ENCODE measurements at regions of chr11 and their contacts with region 1.

Region 1: GRCh38 chr11:47552566-47553416 is at the start of gene CELF1:
- DNase-seq: peak; percentile 98
- H3K4me3 Mint-ChIP-seq: peak within 1 kb of the TSS; percentile 93
- H3K27ac Mint-ChIP-seq: peak within 1 kb of the TSS; percentile 95
- H3K4me1 Mint-ChIP-seq: peaks cover 32% of the 10 kb centered on the region
- H3K27me3 Mint-ChIP-seq: no peaks in the 10 kb centered on the region
- total RNA-seq, gene CELF1: 154 and 159 TPM in 2 replicates

Region 2: GRCh38 chr11:47269002-47269828 is 283.6 kb before region 1 on chr11:
- intact Hi-C with region 1: loop called (anchors 10 kb)
- DNase-seq: peak; percentile 94
- H3K4me3 Mint-ChIP-seq: peak overlapping the region; percentile 81
- H3K27ac Mint-ChIP-seq: peak overlapping the region; percentile 97
- H3K4me1 Mint-ChIP-seq: peaks cover 53% of the 10 kb centered on the region
- H3K27me3 Mint-ChIP-seq: no peaks in the 10 kb centered on the region

Region 3: GRCh38 chr11:47296045-47296444 is 256.7 kb before region 1 on chr11:
- intact Hi-C with region 1: no loop called
- DNase-seq: no peak
- H3K4me3 Mint-ChIP-seq: no peak overlapping the region
- H3K27ac Mint-ChIP-seq: no peak overlapping the region
- H3K4me1 Mint-ChIP-seq: peaks cover 4% of the 10 kb centered on the region
- H3K27me3 Mint-ChIP-seq: no peaks in the 10 kb centered on the region

Region 4: DNA sequence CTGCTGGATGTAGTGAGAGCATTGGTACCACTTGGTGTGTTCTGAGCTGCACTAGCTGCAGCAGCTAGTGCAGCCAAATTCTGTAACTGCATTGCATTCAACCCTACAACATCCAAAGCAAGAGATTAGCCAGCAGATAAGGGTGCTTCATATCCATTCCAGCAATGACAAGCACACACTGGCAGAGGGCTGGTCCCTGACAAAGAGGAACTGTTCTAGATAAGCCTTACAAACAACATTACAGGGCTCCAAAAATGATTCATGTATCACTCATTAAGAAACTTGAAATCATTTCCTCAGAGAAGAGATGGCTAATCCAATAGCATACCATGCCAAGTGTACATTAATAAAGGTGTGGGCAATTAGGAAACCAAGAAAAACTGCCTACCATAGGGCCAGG is 75.5 kb before region 1 on chr11:
- intact Hi-C with region 1: loop called (anchors 2 kb)
- DNase-seq: no peak
- H3K4me3 Mint-ChIP-seq: no peak overlapping the region
- H3K27ac Mint-ChIP-seq: peak overlapping the region; percentile 81
- H3K4me1 Mint-ChIP-seq: peaks cover 7% of the 10 kb centered on the region
- H3K27me3 Mint-ChIP-seq: no peaks in the 10 kb centered on the region

Region 5: GRCh38 chr11:47523468-47524225 is 29.1 kb before region 1 on chr11:
- intact Hi-C with region 1: loop called (anchors 2 kb)
- DNase-seq: peak; percentile 83
- H3K4me3 Mint-ChIP-seq: peak overlapping the region; percentile 64
- H3K27ac Mint-ChIP-seq: peak overlapping the region; percentile 85
- H3K4me1 Mint-ChIP-seq: peaks cover 50% of the 10 kb centered on the region
- H3K27me3 Mint-ChIP-seq: no peaks in the 10 kb centered on the region

Region 6: GRCh38 chr11:47578524-47579460 is 26.0 kb after region 1 on chr11 and contains the starts of genes KBTBD4 and NDUFS3:
- intact Hi-C with region 1: loop called (anchors 1 kb)
- DNase-seq: peak; percentile 98
- H3K4me3 Mint-ChIP-seq: peak within 1 kb of the TSS; percentile 94
- H3K27ac Mint-ChIP-seq: peak within 1 kb of the TSS; percentile 96
- H3K4me1 Mint-ChIP-seq: peaks cover 27% of the 10 kb centered on the region
- H3K27me3 Mint-ChIP-seq: no peaks in the 10 kb centered on the region
- total RNA-seq, gene KBTBD4: 16.4 and 16.7 TPM in 2 replicates
- total RNA-seq, gene NDUFS3: 151 and 159 TPM in 2 replicates

Region 7: DNA sequence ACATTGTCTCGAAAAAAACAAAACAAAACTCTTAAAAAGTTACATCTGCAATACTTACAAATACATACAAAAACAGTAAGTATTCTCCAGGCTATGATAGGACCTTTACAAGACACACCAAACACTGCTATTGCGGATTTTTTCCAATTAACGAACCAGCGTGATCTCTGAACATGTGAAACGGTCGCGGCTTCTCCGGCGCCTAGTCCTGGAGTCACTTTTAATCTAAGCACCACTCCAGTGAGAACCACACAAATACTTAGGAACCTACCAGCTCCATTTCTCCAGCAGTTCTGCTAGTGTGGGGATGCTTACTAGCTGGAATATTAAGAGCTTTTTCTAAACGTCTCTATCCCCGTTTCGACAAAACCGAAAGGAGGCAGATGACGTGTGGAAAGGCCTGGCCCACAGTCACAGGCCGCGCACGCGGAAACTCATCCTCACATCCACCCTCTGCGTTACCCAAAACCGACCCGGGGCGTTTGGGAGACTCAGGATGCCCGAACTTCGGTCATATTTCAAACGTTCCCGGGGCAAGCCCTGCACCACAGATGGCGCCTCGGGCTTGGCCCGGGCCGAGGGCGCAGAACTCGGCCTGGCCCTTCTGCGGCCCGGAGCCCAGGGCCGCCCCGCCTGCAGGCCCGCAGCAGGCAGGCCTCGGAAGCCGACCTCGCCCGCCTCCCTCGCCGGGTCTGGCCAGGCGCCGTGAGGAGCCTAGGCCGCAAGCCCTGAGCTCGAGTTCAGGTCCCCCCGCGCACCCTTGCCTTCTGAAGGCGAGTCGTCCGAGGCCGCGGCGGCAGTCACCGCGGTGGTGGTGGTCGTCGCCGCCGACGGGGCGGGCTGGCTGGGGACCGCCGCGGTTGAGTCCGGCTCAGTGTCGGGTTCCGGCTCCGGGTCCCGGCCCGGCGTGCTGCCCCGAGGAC is 213.8 kb after region 1 on chr11:
- intact Hi-C with region 1: loop called (anchors 5 kb)
- DNase-seq: peak; percentile 93
- H3K4me3 Mint-ChIP-seq: peak overlapping the region; percentile 100
- H3K27ac Mint-ChIP-seq: peak overlapping the region; percentile 100
- H3K4me1 Mint-ChIP-seq: peaks cover 21% of the 10 kb centered on the region
- H3K27me3 Mint-ChIP-seq: no peaks in the 10 kb centered on the region

Measured in activated CD4-positive, alpha-beta T cell treated with anti-CD3 and anti-CD28 coated beads, Interleukin-2, amount 10 ng/mL, durations not matched to agents 24 days and 14 days (primary cell).